ENCODE measurements at regions of chr5 and their contacts with region 1.

Region 1: DNA sequence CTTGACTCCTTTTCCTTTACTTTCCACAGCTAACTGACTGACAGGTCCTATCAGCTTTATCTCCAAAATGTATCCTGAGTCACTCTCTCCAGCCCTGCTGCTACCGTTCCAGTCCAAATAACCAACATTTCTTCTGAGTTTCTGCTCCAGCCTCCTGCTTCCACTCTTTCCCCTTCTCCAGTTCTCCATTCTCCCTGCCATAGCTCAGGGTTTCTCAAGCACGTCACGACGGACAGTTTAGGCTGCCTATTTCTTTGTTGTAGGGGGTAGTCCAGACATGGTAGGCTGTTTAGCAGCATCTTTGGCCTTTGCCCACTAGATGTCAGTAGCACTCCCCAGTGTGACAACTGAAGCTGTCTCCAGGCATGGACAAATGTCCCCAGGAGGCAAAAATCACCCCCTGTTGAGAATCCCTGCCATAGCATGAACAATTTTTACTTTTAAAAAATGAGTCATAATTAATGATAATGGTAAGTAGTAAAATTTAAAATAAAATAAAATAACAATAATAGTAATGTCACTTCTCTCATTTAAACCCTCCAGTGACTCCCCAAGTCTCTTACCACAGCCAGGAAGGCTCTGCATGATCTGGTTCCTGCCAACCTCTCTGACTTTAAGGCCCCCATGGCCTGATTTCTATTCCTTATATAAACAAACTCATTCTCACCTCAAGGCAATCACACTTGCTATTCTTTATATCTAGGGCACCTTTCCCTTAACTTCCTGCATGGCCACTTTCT is 105.4 kb upstream of the FER start:
- DNase-seq: peak; percentile 82
- H3K4me3 ChIP-seq: no peak overlapping the region
- H3K27ac ChIP-seq: no peak overlapping the region
- H3K4me1 ChIP-seq: peaks cover 5% of the 10 kb centered on the region
- H3K27me3 ChIP-seq: no peaks in the 10 kb centered on the region
- CTCF ChIP-seq: peak; percentile 84 to 93
- POLR2A ChIP-seq: no peak

Region 2: GRCh38 chr5:108521841-108522506 is 120.4 kb before region 1 on chr5:
- CTCF ChIA-PET with region 1: no interaction called
- POLR2A ChIA-PET with region 1: no interaction called
- dilution Hi-C with region 1: no loop called
- intact Hi-C with region 1: loop called (anchors 1 kb)
- DNase-seq: peak; percentile 71
- H3K4me3 ChIP-seq: no peak overlapping the region
- H3K27ac ChIP-seq: no peak overlapping the region
- H3K4me1 ChIP-seq: no peaks in the 10 kb centered on the region
- H3K27me3 ChIP-seq: no peaks in the 10 kb centered on the region
- CTCF ChIP-seq: peak; percentile 50 to 54
- POLR2A ChIP-seq: no peak

Region 3: DNA sequence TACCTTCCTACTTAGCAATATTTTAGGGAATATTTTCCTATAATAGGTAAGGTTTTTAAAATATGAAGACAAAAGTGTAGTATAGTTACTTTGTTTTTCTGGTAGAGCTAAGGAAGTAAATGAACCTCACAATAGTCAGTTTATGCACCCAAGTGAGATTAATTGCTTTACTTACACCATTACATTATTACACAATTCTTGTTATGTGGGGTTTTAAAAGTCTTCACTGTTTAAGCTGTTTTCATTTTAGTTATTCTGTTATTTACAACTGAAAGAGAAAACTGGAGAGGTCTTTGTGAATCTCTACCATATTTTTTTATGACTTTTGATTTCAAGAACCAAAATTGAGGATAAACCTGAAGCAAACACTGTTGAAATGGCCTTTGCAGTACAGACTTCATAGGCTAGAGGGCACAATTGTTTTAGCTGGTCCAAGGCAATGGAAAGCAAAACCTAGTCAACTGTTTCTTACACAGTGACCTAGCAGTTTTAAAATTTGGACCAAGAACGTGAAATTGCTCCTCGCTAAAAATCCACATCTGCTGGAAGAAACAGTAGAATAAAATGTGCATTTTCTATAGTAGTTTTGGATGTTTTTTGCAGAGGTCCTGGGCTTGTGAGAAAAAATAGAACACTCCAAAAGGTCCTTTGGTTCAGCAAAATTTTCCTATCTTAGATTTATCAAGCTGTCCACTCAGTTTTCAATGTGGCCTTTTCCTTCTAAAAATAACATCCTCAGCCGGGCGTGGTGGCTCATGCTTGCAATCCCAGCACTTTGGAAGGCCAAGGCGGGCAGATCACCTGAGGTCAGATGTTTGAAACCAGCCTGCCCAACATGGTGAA is 39.0 kb after region 1 on chr5:
- CTCF ChIA-PET with region 1: interaction called, 27 read pairs
- POLR2A ChIA-PET with region 1: no interaction called
- dilution Hi-C with region 1: no loop called
- intact Hi-C with region 1: loop called (anchors 1 kb)
- DNase-seq: peak; percentile 81
- H3K4me3 ChIP-seq: no peak overlapping the region
- H3K27ac ChIP-seq: no peak overlapping the region
- H3K4me1 ChIP-seq: no peaks in the 10 kb centered on the region
- H3K27me3 ChIP-seq: no peaks in the 10 kb centered on the region
- CTCF ChIP-seq: peak; percentile 59 to 69
- POLR2A ChIP-seq: no peak

Region 4: GRCh38 chr5:108900668-108901067 is 258.3 kb after region 1 on chr5:
- CTCF ChIA-PET with region 1: interaction called, 4 read pairs
- POLR2A ChIA-PET with region 1: no interaction called
- dilution Hi-C with region 1: no loop called
- intact Hi-C with region 1: loop called (anchors 5 kb)
- DNase-seq: peak; percentile 24
- H3K4me3 ChIP-seq: no peak overlapping the region
- H3K27ac ChIP-seq: no peak overlapping the region
- H3K4me1 ChIP-seq: peaks cover 21% of the 10 kb centered on the region
- H3K27me3 ChIP-seq: no peaks in the 10 kb centered on the region
- CTCF ChIP-seq: no peak
- POLR2A ChIP-seq: no peak

Region 5: GRCh38 chr5:109191153-109191558 is 548.8 kb after region 1 on chr5:
- CTCF ChIA-PET with region 1: no interaction called
- POLR2A ChIA-PET with region 1: no interaction called
- dilution Hi-C with region 1: no loop called
- intact Hi-C with region 1: loop called (anchors 10 kb)
- DNase-seq: peak; percentile 78
- H3K4me3 ChIP-seq: no peak overlapping the region
- H3K27ac ChIP-seq: peak overlapping the region; percentile 56
- H3K4me1 ChIP-seq: peaks cover 15% of the 10 kb centered on the region
- H3K27me3 ChIP-seq: no peaks in the 10 kb centered on the region
- CTCF ChIP-seq: no peak
- POLR2A ChIP-seq: no peak

Region 6: DNA sequence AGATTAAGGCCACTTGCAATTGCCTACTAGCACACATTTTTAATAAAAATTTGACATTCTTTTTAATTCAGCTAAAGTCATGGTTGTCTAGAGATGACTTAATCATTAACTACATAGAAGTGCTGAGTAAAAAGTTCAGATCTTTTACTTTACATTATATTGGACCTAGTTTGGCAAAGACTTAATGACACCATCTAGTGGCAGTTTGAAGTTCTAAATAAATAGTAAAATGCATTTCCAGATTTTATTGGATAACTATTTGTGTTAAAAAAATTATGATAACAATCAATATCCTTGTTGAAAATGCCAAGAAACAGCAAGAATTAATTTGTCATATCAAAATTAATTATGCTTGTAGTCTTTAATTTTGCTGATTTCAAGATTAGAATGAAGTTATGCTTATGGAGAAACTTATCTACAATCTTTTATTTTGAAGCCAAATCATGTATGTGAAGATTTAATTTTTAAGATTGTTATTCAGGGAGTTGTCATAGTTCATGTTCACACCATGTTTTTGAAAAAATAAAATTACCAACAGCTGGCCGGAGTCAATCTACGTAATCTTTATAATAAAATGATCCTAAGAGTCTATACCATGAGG is 837.0 kb after region 1 on chr5:
- CTCF ChIA-PET with region 1: interaction called, 18 read pairs
- POLR2A ChIA-PET with region 1: no interaction called
- dilution Hi-C with region 1: no loop called
- intact Hi-C with region 1: loop called (anchors 1 kb)
- DNase-seq: peak; percentile 40
- H3K4me3 ChIP-seq: no peak overlapping the region
- H3K27ac ChIP-seq: no peak overlapping the region
- H3K4me1 ChIP-seq: no peaks in the 10 kb centered on the region
- H3K27me3 ChIP-seq: no peaks in the 10 kb centered on the region
- CTCF ChIP-seq: peak; percentile 23 to 25
- POLR2A ChIP-seq: no peak